ENCODE measurements at regions of chr11 and their contacts with region 1.

Region 1: GRCh38 chr11:65117216-65118096 is at the start of gene ZNHIT2:
- DNase-seq: peak; percentile 94 to 100 (median 100)
- ATAC-seq: peak; percentile 85
- H3K4me3 ChIP-seq: peak within 1 kb of the TSS; percentile 92
- H3K4me3 Mint-ChIP-seq: peak within 1 kb of the TSS; percentile 91 to 95 (median 92)
- H3K27ac ChIP-seq: peak within 1 kb of the TSS; percentile 99
- H3K27ac Mint-ChIP-seq: peak within 1 kb of the TSS; percentile 86 to 100 (median 96)
- H3K4me1 ChIP-seq: peaks cover 28 to 37% of the 10 kb centered on the region in 2 donors
- H3K4me1 Mint-ChIP-seq: peaks cover 20 to 77% (median 53%) of the 10 kb centered on the region in 7 donors
- H3K27me3 ChIP-seq: no peaks in the 10 kb centered on the region
- H3K27me3 Mint-ChIP-seq: no peaks in the 10 kb centered on the region
- total RNA-seq, gene ZNHIT2: 9.9 to 18.2 (median 11.3) TPM

Region 2: GRCh38 chr11:64916775-64917662 is 200.4 kb before region 1 on chr11 and contains the start of gene ATG2A:
- CTCF ChIA-PET with region 1: interaction called, 3 read pairs
- POLR2A ChIA-PET with region 1: interaction called, 3 read pairs
- intact Hi-C with region 1: loop called (anchors 1 kb)
- DNase-seq: peak; percentile 95 to 100 (median 99)
- ATAC-seq: peak; percentile 97
- H3K4me3 ChIP-seq: peak within 1 kb of the TSS; percentile 92
- H3K4me3 Mint-ChIP-seq: peak within 1 kb of the TSS; percentile 88 to 98 (median 91)
- H3K27ac ChIP-seq: peak within 1 kb of the TSS; percentile 83
- H3K27ac Mint-ChIP-seq: peak within 1 kb of the TSS; percentile 81 to 99 (median 91)
- H3K4me1 ChIP-seq: peaks cover 18 to 22% of the 10 kb centered on the region in 2 donors
- H3K4me1 Mint-ChIP-seq: peaks cover 14 to 33% (median 25%) of the 10 kb centered on the region in 7 donors
- H3K27me3 ChIP-seq: no peaks in the 10 kb centered on the region
- H3K27me3 Mint-ChIP-seq: no peaks in the 10 kb centered on the region
- total RNA-seq, gene ATG2A: 30.6 to 105 (median 36.2) TPM

Region 3: DNA sequence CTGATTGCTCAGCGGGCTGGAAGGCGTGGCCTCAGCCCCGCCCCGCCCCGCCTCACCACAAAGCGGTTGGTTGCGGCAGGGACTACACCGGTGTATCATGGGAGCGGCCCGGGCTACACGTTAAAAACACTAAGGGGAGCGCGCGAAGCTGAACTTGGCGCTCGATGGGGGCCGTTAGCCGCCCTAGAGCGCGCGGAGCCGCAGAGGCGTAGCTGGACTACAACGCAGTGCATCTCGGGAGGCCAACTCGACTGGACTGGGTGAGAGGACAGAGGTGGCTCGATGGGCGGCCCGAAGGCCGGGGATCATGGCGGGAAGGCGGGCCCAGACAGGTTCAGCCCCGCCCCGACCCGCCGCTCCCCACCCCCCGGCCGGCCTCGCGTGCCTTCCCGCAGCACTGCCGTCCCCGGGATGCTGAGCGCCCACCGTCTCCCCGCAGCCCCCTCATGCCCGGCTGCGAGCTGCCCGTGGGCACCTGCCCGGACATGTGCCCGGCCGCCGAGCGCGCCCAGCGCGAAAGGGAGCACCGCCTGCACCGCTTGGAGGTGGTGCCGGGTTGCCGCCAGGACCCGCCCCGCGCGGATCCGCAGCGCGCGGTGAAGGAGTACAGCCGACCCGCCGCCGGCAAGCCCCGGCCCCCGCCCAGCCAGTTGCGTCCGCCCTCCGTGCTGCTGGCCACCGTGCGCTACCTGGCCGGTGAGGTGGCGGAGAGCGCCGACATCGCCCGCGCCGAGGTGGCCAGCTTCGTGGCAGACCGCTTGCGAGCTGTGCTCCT is 76.4 kb before region 1 on chr11 and contains the start of gene SAC3D1:
- CTCF ChIA-PET with region 1: no interaction called
- POLR2A ChIA-PET with region 1: interaction called, 16 read pairs
- intact Hi-C with region 1: loop called in 1 of 2 experiments (anchors 1 kb)
- DNase-seq: peak; percentile 74 to 94 (median 88)
- ATAC-seq: peak; percentile 95
- H3K4me3 ChIP-seq: peak within 1 kb of the TSS; percentile 86
- H3K4me3 Mint-ChIP-seq: peak within 1 kb of the TSS; percentile 90 to 96 (median 94)
- H3K27ac ChIP-seq: peak within 1 kb of the TSS; percentile 78
- H3K27ac Mint-ChIP-seq: peak within 1 kb of the TSS; percentile 69 to 95 (median 92)
- H3K4me1 ChIP-seq: peaks cover 3 to 9% of the 10 kb centered on the region in 2 donors
- H3K4me1 Mint-ChIP-seq: peaks cover 11 to 25% (median 20%) of the 10 kb centered on the region in 7 donors
- H3K27me3 ChIP-seq: no peaks in the 10 kb centered on the region
- H3K27me3 Mint-ChIP-seq: no peaks in the 10 kb centered on the region
- total RNA-seq, gene SAC3D1: 2.7 to 18.2 (median 8.6) TPM

Region 4: DNA sequence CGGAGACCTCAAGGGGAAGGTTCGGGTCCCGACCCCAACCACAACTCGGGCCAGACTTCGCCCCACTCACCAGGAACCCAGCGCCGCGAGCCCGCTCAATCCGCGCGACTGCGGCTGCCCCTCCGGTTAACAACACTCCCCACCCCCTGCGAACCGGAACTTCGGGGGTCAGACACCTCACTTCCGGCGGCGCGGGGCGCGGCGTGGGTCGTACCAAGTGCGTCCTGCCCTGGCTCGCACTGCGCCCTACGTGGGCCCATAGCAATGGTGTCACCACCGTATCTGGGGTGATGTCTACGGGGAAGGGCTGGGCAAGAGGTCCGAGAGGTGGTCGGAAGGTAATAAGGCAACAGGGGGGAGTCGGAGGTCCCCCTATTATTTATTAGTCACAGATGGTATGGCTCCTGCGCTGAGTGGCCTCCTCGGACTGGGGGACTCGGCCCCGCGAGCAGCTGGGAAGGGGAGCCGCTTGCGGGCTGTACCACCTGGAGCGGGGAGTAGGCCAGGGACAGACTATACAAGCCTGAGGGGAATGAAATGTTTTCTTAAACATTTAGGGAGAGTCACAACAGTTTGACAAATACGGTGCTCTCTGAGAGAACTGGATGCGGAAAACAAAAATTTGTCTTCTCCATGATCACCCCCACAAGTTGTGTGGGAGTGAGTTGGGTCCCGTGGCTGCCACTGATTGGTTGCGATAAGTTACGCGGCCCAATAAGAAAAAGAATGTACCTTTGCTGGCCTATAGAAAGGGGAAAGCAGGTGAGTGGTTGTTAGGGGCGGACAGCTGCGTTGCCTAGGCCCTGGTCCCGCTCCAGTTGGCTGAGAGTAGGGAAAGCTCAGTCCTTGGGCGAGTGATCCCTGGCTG is 17.2 kb after region 1 on chr11 and contains the start of gene SYVN1:
- CTCF ChIA-PET with region 1: interaction called, 12 read pairs
- POLR2A ChIA-PET with region 1: interaction called, 237 read pairs
- intact Hi-C with region 1: loop called (anchors 1 kb)
- DNase-seq: peak; percentile 88 to 95 (median 93)
- ATAC-seq: peak; percentile 90
- H3K4me3 ChIP-seq: peak within 1 kb of the TSS; percentile 90
- H3K4me3 Mint-ChIP-seq: peak within 1 kb of the TSS; percentile 89 to 100 (median 99)
- H3K27ac ChIP-seq: peak within 1 kb of the TSS; percentile 99
- H3K27ac Mint-ChIP-seq: peak within 1 kb of the TSS; percentile 97 to 100 (median 99)
- H3K4me1 ChIP-seq: peaks cover 10 to 21% of the 10 kb centered on the region in 2 donors
- H3K4me1 Mint-ChIP-seq: peaks cover 31 to 50% (median 40%) of the 10 kb centered on the region in 7 donors
- H3K27me3 ChIP-seq: no peaks in the 10 kb centered on the region
- H3K27me3 Mint-ChIP-seq: no peaks in the 10 kb centered on the region
- total RNA-seq, gene SYVN1: 61.0 to 84.6 (median 67.9) TPM

Region 5: GRCh38 chr11:65314501-65315203 is 197.2 kb after region 1 on chr11 and contains the start of gene CDC42EP2:
- CTCF ChIA-PET with region 1: interaction called, 3 read pairs
- POLR2A ChIA-PET with region 1: no interaction called
- intact Hi-C with region 1: loop called in 1 of 2 experiments (anchors 10 kb)
- DNase-seq: peak; percentile 42 to 87 (median 56)
- ATAC-seq: peak; percentile 94
- H3K4me3 ChIP-seq: peak within 1 kb of the TSS; percentile 68
- H3K4me3 Mint-ChIP-seq: peak within 1 kb of the TSS; percentile 47 to 86 (median 76)
- H3K27ac ChIP-seq: peak within 1 kb of the TSS; percentile 59
- H3K27ac Mint-ChIP-seq: peak within 1 kb of the TSS in 3 of 9 donors; percentile 32 to 40 (median 38)
- H3K4me1 ChIP-seq: peaks cover 0 to 11% of the 10 kb centered on the region in 2 donors
- H3K4me1 Mint-ChIP-seq: peaks cover 0 to 13% (median 5%) of the 10 kb centered on the region in 7 donors
- H3K27me3 ChIP-seq: no peaks in the 10 kb centered on the region
- H3K27me3 Mint-ChIP-seq: peaks cover 0 to 12% (median 0%) of the 10 kb centered on the region in 5 donors
- total RNA-seq, gene CDC42EP2: 0.58 to 1.8 (median 0.89) TPM

Region 6: GRCh38 chr11:66491315-66491935 is 1374.0 kb after region 1 on chr11:
- CTCF ChIA-PET with region 1: no interaction called
- POLR2A ChIA-PET with region 1: no interaction called
- intact Hi-C with region 1: no loop called
- DNase-seq: no peak
- ATAC-seq: no peak
- H3K4me3 ChIP-seq: no peak overlapping the region
- H3K4me3 Mint-ChIP-seq: no peak overlapping the region
- H3K27ac ChIP-seq: no peak overlapping the region
- H3K27ac Mint-ChIP-seq: peak overlapping the region in 1 of 9 donors; percentile 14
- H3K4me1 ChIP-seq: no peaks in the 10 kb centered on the region
- H3K4me1 Mint-ChIP-seq: no peaks in the 10 kb centered on the region
- H3K27me3 ChIP-seq: no peaks in the 10 kb centered on the region
- H3K27me3 Mint-ChIP-seq: no peaks in the 10 kb centered on the region

Measured in naive thymus-derived CD4-positive, alpha-beta T cell (primary cell).